ENCODE measurements at regions of chr3 and their contacts with region 1.

Region 1: DNA sequence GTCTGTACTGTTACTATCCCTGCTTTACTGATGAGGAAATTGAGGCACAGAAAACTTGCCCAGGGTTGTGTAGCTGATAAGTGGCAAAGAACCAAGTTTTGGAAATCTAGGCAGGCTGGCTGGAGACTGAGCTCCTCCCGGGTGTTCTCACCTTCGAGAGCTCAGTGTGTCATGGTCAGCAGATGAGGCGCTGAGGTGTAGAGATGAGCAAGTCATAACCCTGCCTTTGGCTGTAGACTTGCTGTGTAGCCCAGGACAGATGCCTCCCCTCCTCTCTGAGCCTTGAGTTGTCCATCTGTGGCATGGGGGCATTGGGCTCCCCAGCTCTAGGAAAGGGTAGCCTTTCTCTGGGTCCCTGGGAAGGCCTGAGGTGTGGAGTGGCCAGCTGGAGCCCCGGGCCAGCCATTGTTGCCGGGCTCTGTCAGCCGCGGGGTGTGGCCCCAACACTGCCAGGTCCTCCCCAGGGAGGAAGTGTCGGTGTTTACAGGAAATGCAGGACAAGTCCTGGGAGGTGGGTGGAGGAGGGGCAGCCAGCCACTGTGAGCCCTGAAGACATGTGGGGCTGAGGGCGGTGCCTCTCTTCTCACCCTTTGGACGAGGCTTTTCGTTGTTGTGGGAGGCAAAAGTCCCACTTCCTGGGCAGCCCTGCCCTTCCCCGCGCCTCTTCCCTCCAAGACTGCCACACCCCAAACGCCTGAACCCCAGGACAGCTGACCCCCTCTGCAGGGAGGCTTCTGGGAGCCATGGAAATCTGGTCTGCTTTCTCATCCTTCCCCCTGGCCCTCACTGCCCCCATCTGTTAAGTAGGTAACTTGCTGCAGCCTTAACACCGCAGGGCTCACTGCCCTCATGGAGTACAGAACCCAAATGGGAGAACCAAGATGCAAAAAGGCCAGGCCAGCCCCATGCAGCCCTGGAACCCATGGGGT is 29.1 kb downstream of the FGD5 start:
- DNase-seq: no peak
- H3K4me3 ChIP-seq: no peak overlapping the region
- CTCF ChIP-seq: no peak

Region 2: DNA sequence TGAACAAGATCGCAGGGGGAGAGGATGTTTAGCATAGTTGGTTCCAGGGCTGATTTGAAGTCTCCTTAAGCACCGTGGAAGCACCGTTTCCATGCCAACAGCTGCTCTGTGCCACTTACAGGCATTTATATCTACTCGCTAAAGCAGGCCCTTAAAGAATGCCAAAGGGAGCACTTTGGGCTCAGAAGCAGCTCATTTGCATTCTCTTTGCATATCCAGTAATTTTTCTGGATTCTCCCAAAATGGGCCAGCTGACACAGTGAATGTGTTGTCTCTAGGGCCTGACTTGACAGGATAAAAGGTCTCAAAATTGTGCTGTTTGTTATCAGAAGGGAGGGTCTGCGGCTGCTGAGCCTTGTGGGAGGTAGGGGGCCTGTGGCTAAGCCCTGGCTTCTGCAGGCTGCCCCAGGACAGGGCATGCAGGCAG is 1160.3 kb before region 1 on chr3:
- in situ Hi-C with region 1: loop called (anchors 10 kb)
- DNase-seq: no peak
- H3K4me3 ChIP-seq: no peak overlapping the region
- CTCF ChIP-seq: no peak

Region 3: DNA sequence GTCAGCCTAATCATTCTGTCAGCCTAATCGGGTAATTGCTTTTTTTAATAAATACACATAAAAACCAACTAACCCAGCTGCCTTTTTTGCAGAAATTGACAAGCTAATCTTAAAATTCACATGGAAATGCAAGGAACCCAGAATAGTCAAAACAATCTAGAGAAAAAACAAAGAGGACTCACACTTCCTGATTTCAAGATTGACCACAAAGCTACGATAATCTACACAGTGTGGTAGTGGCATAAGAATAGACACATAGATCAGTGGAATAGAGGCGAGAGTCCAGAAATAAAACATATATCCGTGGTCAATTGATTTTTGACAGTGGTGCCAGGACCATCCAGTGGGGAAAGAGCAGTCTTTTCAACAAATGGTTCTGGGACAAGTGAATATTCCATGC is 175.3 kb before region 1 on chr3:
- in situ Hi-C with region 1: loop called (anchors 5 kb)
- DNase-seq: no peak
- H3K4me3 ChIP-seq: no peak overlapping the region
- CTCF ChIP-seq: no peak